ENCODE measurements at regions of chr12 and their contacts with region 1.

Region 1: GRCh38 chr12:23204933-23205778 is 580.2 kb downstream of the ETNK1 start:
- DNase-seq: peak; percentile 27
- ATAC-seq: peak; percentile 93
- H3K4me3 ChIP-seq: no peak overlapping the region
- H3K27ac ChIP-seq: no peak overlapping the region
- H3K4me1 ChIP-seq: no peaks in the 10 kb centered on the region
- H3K27me3 ChIP-seq: no peaks in the 10 kb centered on the region
- CTCF ChIP-seq: peak; percentile 83 to 90 (median 90)
- EP300 ChIP-seq: no peak
- POLR2A ChIP-seq: no peak
- RAD21 ChIP-seq: peak; percentile 81

Region 2: GRCh38 chr12:22856178-22856577 is 349.0 kb before region 1 on chr12:
- CTCF ChIA-PET with region 1: interaction called, 16 read pairs
- POLR2A ChIA-PET with region 1: no interaction called
- RAD21 ChIA-PET with region 1: no interaction called
- SMC1A ChIA-PET with region 1: no interaction called
- in situ Hi-C with region 1: no loop called
- intact Hi-C with region 1: no loop called
- DNase-seq: no peak
- ATAC-seq: no peak
- H3K4me3 ChIP-seq: no peak overlapping the region
- H3K27ac ChIP-seq: no peak overlapping the region
- H3K4me1 ChIP-seq: no peaks in the 10 kb centered on the region
- H3K27me3 ChIP-seq: no peaks in the 10 kb centered on the region; a peak in 1 of 4 replicates
- CTCF ChIP-seq: peak; percentile 35 to 56 (median 45); a peak in 5 of 6 replicates
- EP300 ChIP-seq: no peak
- POLR2A ChIP-seq: no peak
- RAD21 ChIP-seq: peak; percentile 62

Region 3: GRCh38 chr12:24012528-24012927 is 807.4 kb after region 1 on chr12:
- CTCF ChIA-PET with region 1: no interaction called
- POLR2A ChIA-PET with region 1: no interaction called
- RAD21 ChIA-PET with region 1: no interaction called
- SMC1A ChIA-PET with region 1: no interaction called
- in situ Hi-C with region 1: no loop called
- intact Hi-C with region 1: loop called (anchors 10 kb)
- DNase-seq: no peak
- ATAC-seq: no peak
- H3K4me3 ChIP-seq: no peak overlapping the region
- H3K27ac ChIP-seq: no peak overlapping the region
- H3K4me1 ChIP-seq: no peaks in the 10 kb centered on the region
- H3K27me3 ChIP-seq: no peaks in the 10 kb centered on the region; a peak in 2 of 4 replicates
- CTCF ChIP-seq: peak in 1 of 3 experiments; percentile 34; a peak in 1 of 6 replicates
- EP300 ChIP-seq: no peak
- POLR2A ChIP-seq: no peak
- RAD21 ChIP-seq: no peak

Region 4: DNA sequence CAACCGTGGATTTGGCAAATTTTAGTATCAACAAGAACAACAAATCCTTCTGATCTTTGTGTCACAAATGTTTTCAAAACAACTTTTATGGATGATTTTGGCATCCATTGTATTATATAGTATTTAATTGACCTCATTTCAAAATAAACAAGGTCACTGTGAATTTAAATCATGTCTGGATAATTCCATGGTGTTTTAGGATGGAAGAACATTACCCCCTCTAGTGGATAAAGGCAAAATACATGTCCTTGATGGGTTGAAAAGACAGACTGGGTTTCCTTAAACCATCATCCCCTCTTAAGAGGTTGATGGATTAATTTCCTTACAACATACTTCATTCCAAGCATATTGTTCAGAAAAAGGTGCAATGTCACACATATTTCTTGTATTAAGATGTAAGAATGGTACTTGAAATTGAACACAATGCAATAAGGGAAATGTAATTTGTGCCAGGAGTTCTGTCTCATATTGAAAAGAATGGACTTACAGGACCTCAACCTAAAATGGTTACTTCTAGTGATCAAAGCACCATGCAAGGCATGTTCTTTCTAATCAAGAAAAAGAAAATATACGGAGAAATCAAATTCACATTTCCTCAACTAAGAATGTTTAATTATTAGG is 1391.7 kb after region 1 on chr12:
- CTCF ChIA-PET with region 1: no interaction called
- POLR2A ChIA-PET with region 1: no interaction called
- RAD21 ChIA-PET with region 1: no interaction called
- SMC1A ChIA-PET with region 1: no interaction called
- in situ Hi-C with region 1: no loop called
- intact Hi-C with region 1: loop called (anchors 5 kb)
- DNase-seq: no peak
- ATAC-seq: peak; percentile 42; the same call in 1 of the 3 replicates
- H3K4me3 ChIP-seq: no peak overlapping the region
- H3K27ac ChIP-seq: no peak overlapping the region
- H3K4me1 ChIP-seq: no peaks in the 10 kb centered on the region
- H3K27me3 ChIP-seq: no peaks in the 10 kb centered on the region
- CTCF ChIP-seq: peak; percentile 53 to 55 (median 55)
- EP300 ChIP-seq: no peak
- POLR2A ChIP-seq: no peak
- RAD21 ChIP-seq: peak; percentile 55

Region 5: GRCh38 chr12:25130741-25131188 is 1925.6 kb after region 1 on chr12:
- CTCF ChIA-PET with region 1: no interaction called
- POLR2A ChIA-PET with region 1: no interaction called
- RAD21 ChIA-PET with region 1: no interaction called
- SMC1A ChIA-PET with region 1: no interaction called
- in situ Hi-C with region 1: loop called (anchors 10 kb)
- intact Hi-C with region 1: no loop called
- DNase-seq: no peak
- ATAC-seq: peak; percentile 78
- H3K4me3 ChIP-seq: no peak overlapping the region
- H3K27ac ChIP-seq: no peak overlapping the region
- H3K4me1 ChIP-seq: peaks cover 2% of the 10 kb centered on the region; the same call in 1 of the 2 replicates
- H3K27me3 ChIP-seq: no peaks in the 10 kb centered on the region
- CTCF ChIP-seq: peak in 2 of 3 experiments; percentile 32 to 43; a peak in 3 of 6 replicates
- EP300 ChIP-seq: no peak
- POLR2A ChIP-seq: no peak
- RAD21 ChIP-seq: peak; percentile 65

Measured in GM12878 (cell line).